ENCODE measurements at regions of chr2 and their contacts with region 1.

Region 1: DNA sequence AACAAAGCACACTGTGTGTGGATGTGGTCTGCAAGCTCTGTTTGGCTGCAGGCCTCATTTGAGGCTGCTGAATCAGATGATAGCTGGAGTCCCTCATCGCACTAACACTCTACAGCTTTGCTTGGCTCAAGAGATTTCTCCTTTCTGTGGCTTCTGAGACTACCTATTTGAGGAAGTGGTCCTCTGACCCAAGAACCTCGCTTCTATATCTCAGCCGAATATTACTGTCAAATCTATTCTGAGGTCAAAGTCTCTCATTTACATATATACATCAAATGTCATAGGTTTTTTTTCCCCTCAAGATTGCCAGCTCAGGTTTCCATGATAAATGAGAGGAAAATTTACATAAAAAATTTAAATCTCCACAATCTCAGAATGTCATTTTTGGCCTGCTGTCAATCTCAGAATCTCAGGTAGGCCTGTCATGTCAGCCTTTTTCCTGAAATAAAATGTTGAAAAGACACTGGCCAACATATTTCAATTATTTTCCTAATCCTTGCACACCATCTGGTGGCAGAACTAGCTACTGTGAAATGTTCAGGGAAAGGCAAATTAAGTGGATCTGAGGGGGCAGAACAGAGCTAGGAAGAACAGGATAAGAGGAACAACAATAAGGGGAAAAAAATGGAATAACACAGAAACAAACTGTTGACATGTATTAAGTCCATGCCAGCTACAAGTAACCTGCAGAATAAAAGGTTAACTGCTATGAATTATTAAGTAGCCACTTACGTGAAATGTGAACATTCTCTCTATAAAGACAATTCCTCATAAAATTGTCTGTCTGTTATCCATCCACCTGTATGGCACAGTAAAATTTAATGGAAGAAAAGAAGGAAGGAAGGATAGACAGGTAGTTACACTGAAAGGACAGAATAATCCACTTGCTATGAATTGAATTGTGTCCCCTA is 39.3 kb downstream of the AP1S3 start:
- DNase-seq: peak; percentile 56
- H3K4me3 ChIP-seq: no peak overlapping the region
- H3K27ac ChIP-seq: peak overlapping the region; percentile 95
- H3K4me1 ChIP-seq: peaks cover 44% of the 10 kb centered on the region
- H3K27me3 ChIP-seq: no peaks in the 10 kb centered on the region
- CTCF ChIP-seq: peak; percentile 64

Region 2: DNA sequence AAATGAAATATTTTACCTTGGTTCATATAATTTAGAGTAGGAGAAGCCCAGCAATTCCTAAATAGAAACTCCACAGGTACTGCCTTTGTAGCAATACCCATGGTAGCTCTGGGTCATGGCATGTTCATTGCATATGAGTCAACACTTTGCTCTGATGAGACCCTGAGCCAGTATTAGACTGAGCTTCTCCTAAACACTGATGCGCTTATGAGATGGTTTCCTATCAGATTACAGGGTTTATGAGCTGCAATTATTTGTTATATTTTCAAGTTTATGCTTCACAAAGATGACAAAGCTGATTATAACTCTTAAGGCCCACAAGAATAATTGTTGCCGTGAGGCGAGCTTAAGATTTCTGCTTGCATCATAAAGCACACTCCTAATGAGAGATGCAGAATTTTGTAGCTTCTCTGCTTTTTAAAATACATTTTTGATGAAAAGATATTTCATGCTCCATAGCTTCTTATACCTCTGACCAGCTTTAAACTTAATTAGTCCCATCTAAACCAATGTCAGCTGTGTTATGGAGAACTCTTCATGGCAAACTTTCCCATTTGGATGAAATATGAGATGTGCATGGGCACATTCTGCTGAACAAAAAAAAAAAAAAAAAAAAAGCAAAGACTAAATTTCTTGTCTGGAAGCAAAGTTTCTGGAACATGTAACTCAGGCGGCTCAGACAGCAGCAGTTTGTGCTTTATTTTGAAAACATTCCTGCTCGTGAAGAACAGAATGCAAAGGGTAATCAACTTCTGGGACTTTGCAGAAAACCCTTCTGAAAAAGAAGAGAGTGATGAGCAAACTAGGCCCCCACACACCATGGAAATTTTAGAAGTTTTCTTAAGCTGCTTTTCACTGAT is 583.4 kb before region 1 on chr2:
- CTCF ChIA-PET with region 1: no interaction called
- dilution Hi-C with region 1: no loop called
- in situ Hi-C with region 1: no loop called
- intact Hi-C with region 1: no loop called
- DNase-seq: no peak
- H3K4me3 ChIP-seq: no peak overlapping the region
- H3K27ac ChIP-seq: no peak overlapping the region
- H3K4me1 ChIP-seq: peaks cover 7% of the 10 kb centered on the region
- H3K27me3 ChIP-seq: no peaks in the 10 kb centered on the region
- CTCF ChIP-seq: no peak

Region 3: DNA sequence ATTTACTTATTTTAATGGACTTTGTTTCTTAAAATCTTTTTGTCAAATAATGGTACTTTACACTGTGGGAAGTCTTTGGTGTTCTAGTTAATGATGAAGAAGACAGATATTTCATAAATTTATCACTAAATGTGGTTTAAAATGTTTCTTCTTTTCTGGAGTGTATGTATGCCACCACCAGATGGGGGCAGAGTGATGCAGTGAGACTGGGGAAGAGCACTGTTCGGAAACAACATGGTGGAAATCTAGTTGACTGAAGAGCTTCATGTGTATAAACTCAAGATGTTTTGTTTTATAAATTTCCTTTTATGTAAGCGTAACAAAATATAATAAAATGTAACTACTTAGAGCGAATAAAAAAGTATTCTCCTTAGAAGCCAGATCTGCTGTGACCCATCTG is 550.9 kb before region 1 on chr2:
- CTCF ChIA-PET with region 1: interaction called, 3 read pairs
- dilution Hi-C with region 1: no loop called
- in situ Hi-C with region 1: loop called in 1 of 2 experiments (anchors 25 kb)
- intact Hi-C with region 1: loop called (anchors 5 kb)
- DNase-seq: peak; percentile 24
- H3K4me3 ChIP-seq: no peak overlapping the region
- H3K27ac ChIP-seq: no peak overlapping the region
- H3K4me1 ChIP-seq: no peaks in the 10 kb centered on the region
- H3K27me3 ChIP-seq: no peaks in the 10 kb centered on the region
- CTCF ChIP-seq: peak; percentile 62 to 73

Region 4: GRCh38 chr2:223528036-223528435 is 270.0 kb before region 1 on chr2:
- CTCF ChIA-PET with region 1: no interaction called
- dilution Hi-C with region 1: no loop called
- in situ Hi-C with region 1: no loop called
- intact Hi-C with region 1: loop called (anchors 5 kb)
- DNase-seq: peak; percentile 82
- H3K4me3 ChIP-seq: no peak overlapping the region
- H3K27ac ChIP-seq: no peak overlapping the region
- H3K4me1 ChIP-seq: peaks cover 30% of the 10 kb centered on the region
- H3K27me3 ChIP-seq: no peaks in the 10 kb centered on the region
- CTCF ChIP-seq: no peak

Region 5: GRCh38 chr2:223692191-223692947 is 105.7 kb before region 1 on chr2:
- CTCF ChIA-PET with region 1: interaction called, 3 read pairs
- dilution Hi-C with region 1: no loop called
- in situ Hi-C with region 1: loop called (anchors 10 kb)
- intact Hi-C with region 1: loop called (anchors 1 kb)
- DNase-seq: peak; percentile 60
- H3K4me3 ChIP-seq: no peak overlapping the region
- H3K27ac ChIP-seq: no peak overlapping the region
- H3K4me1 ChIP-seq: peaks cover 28% of the 10 kb centered on the region
- H3K27me3 ChIP-seq: no peaks in the 10 kb centered on the region
- CTCF ChIP-seq: peak; percentile 87 to 92

Region 6: DNA sequence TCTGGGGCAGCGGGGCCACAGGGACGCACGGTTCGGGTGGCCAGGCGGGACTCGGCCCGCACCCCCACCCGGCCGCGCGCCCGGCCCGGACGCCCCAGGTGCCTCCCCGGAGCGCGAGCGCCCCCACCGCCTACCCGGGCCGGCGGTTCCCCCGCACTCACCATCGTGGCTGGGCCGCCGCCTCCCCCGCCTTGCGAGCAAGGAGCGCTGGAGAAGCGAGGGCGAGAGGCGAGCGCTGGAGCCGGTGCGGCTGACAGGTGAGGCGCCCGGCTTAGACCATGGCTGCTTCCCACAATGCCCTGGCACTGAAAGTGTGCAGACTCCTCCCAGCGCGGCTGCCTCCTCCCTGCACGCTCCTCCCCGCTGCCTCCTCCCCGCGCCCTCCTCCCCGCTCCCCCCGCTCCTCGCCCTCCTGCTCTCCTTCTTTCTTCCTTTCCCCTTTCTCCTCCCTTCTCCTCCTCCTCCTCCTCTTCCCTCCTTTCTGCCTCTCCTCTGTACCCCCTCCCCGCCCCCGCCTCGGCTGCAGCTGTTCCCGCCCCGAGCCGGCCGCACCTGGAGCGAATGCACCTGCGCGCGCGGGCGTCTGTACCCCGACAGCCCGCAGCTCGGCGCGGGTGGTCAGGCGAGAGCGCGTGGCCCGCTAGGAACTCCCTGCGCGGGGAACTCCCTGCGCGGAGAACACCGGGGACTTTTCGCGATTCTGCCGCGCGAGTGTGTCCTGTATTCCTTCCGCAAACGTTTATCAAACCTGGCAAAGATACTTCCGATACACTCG is 39.4 kb after region 1 on chr2 and contains the start of gene AP1S3:
- CTCF ChIA-PET with region 1: no interaction called
- dilution Hi-C with region 1: no loop called
- in situ Hi-C with region 1: no loop called
- intact Hi-C with region 1: loop called (anchors 2 kb)
- DNase-seq: peak; percentile 87
- H3K4me3 ChIP-seq: peak within 1 kb of the TSS; percentile 76 to 92 (median 78)
- H3K27ac ChIP-seq: peak within 1 kb of the TSS; percentile 41
- H3K4me1 ChIP-seq: peaks cover 26% of the 10 kb centered on the region
- H3K27me3 ChIP-seq: no peaks in the 10 kb centered on the region
- CTCF ChIP-seq: no peak
- total RNA-seq, gene AP1S3: 32.0 to 41.1 TPM

Measured in mammary epithelial cell (primary cell).